BJ (cell line): ENCODE measurements at regions of chr9 and their contacts with region 1.

Region 1: DNA sequence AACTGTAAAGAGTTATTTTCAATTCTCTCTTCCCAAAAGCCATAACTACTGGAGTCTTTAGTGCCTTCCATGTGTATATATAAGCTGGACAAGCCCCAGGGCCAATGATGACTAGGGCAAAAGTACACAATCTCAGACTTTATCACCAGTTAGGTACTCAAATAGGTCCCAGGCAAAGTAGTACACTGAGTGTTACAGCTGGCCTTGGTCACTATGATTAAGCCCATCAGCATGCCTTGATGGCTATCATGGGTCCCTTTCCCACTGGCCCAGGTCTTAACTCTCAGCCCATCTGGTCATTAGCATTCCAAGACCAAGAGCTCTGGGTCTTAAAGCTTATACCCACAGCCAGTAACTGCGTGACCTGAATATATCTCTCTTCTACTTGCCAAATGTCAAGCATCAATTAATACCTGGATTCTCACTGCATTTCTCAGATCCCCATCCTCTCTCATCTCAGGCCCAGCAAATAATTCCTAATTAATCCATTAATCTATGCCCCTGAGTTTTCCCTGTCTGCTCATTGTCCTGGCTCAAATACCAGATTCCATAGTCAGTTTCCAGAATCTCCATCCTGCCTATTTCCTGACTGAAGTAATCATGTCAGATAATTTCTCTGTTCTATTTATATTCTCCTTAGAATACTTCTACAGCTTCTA is 62.3 kb downstream of the NR6A1 start:
- DNase-seq: peak; percentile 70
- H3K4me3 ChIP-seq: no peak overlapping the region
- H3K27me3 ChIP-seq: no peaks in the 10 kb centered on the region
- CTCF ChIP-seq: no peak

Region 2: GRCh38 chr9:124551472-124552272 is 157.1 kb before region 1 on chr9:
- CTCF ChIA-PET with region 1: interaction called, 42 read pairs
- POLR2A ChIA-PET with region 1: no interaction called
- DNase-seq: no peak
- H3K4me3 ChIP-seq: no peak overlapping the region
- H3K27me3 ChIP-seq: 0 out of 2 replicates have a peak, but pooled peaks cover 3% of the 10 kb centered on the region
- CTCF ChIP-seq: peak; percentile 86

Region 3: DNA sequence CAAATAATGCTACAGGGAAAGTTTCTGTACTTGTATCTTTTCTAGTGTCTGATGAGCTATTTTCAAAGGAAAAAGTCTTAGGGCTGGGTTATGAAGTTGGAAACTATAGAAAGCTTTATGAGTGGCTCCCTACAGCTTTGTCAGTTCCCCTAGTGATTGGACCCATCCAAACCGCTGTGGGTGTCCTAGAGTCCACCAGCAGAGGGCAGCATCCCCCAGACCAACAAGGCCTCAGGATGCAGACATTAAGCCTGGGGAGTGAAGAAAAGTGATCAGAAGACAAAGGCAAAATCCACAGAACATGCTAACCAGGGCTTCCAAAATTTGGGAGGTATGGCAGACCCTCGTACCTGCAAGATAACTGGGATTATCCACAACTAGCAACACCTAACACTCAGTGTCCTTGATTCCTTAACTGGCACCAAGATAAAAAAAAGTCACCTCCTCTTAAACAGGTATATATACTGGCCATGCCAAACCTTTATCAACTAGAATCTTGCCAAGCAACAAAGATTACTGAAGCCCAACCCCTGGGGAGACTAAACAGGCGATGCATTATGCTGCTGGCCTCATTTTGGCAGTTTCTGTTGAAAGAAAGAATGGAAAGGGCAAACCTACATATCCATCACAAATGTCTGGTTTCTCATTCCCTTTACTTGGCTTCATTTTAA is 91.2 kb before region 1 on chr9:
- CTCF ChIA-PET with region 1: interaction called, 204 read pairs
- POLR2A ChIA-PET with region 1: no interaction called
- DNase-seq: no peak
- H3K4me3 ChIP-seq: no peak overlapping the region
- H3K27me3 ChIP-seq: no peaks in the 10 kb centered on the region
- CTCF ChIP-seq: peak; percentile 90

Region 4: DNA sequence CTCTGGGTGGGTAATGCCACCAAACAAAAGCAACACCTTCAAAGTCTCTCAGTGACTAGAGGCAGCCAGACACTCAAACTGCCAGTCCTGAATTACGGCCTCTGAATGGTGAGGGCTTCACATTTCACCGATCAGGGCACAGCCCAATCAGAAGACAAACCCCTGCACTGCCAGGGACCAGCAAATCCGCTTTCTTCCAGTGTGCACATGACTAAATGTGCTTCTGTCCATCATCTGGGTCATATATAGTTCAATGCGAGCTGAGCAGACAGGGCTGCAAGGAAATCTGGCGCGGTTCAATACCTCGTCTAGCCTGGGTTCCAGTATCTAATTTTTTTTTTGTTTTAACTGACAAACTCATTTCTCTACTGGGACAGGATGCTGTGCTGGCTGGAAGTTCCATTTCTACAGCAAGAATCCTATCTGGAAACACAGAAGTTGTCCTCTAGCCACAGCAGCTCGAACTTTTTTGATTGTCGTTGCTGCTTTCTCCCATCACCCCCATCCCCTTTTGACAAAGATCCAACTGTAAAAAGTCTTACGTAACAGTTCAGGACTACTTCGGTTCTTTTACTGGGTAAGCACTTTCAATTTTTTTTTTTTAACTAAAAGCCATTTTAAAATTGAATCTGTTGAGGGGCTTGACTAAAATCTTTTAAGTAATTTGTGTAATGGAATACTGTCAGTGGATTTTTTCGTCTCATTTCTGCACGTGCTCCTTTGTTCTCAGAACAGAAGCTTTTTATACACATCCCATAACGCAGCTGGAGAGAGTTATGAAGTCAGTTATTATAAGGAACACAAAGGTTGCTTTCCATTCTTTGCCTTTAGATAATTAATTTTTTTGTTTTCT is 50.4 kb before region 1 on chr9:
- CTCF ChIA-PET with region 1: interaction called, 42 read pairs
- POLR2A ChIA-PET with region 1: interaction called, 5 read pairs
- DNase-seq: peak; percentile 82
- H3K4me3 ChIP-seq: peak overlapping the region; percentile 50
- H3K27me3 ChIP-seq: no peaks in the 10 kb centered on the region
- CTCF ChIP-seq: no peak

Region 5: GRCh38 chr9:124735121-124735520 is 26.4 kb after region 1 on chr9:
- CTCF ChIA-PET with region 1: interaction called, 22 read pairs
- POLR2A ChIA-PET with region 1: no interaction called
- DNase-seq: no peak
- H3K4me3 ChIP-seq: no peak overlapping the region
- H3K27me3 ChIP-seq: no peaks in the 10 kb centered on the region
- CTCF ChIP-seq: no peak

Region 6: DNA sequence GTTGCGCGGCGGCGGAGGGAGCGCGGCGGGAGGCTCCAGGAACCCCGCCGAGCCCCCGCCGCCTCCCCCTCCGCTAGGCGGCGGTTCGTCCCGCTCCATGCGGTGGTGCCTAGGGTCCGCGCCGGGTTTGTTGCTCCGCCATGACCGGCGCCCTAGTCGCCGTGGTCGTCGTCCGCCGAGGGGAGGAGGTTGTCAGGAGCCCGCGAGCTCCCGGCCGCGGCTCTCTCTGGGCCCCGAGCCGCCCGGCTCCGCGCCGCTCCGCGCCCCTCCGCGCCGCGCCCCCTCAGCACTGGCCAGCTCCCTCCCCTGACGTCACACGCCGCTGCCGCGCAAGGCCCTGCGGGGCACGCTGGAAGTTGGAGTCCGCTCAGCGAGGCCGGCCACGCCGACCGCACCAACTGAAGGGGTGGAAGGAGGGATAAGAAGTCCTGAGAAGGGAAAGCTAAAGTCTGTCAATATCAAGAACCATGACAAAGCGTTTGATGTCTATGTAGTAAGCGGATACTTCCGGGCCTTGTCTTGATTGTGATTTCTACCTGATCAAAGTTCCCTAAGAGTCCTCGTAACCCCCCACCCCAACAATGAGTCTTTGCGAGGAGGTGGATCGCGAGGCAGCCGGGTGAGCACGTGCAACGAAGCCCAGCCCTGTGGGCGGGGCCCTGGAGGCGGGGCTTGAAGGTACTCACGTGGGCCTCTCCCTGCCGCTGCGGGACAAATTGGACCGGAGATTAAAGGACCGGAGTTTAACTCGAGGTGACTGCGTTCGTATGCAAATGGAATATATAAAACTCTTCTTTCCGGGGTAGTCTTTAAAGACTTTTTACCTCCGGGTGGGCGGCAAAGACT is 62.5 kb after region 1 on chr9 and contains the start of gene NR6A1:
- CTCF ChIA-PET with region 1: interaction called, 12 read pairs
- POLR2A ChIA-PET with region 1: no interaction called
- DNase-seq: peak; percentile 68
- H3K4me3 ChIP-seq: peak within 1 kb of the TSS; percentile 60
- H3K27me3 ChIP-seq: peaks cover 26% of the 10 kb centered on the region
- CTCF ChIP-seq: no peak
- polyA plus RNA-seq, gene NR6A1: 0.23 and 0.25 TPM in 2 replicates